ENCODE measurements at regions of chr21 and their contacts with region 1.

Region 1: GRCh38 chr21:15199414-15200364 is 134.9 kb upstream of the NRIP1 start:
- DNase-seq: no peak
- ATAC-seq: peak; percentile 80 to 87

Region 2: GRCh38 chr21:15121655-15122120 is 78.0 kb before region 1 on chr21:
- intact Hi-C with region 1: loop called in 1 of 2 experiments (anchors 5 kb)
- DNase-seq: peak; percentile 54
- ATAC-seq: peak; percentile 92 to 93